Activated T-helper 2 cell treated with anti-CD3 and anti-CD28 coated beads, Interferon-gamma antibody, Interleukin-2, Interleukin-4, amounts not matched to agents 10 μg/mL and 5 μg/mL and 100 μg/mL, durations not matched to agents 14 hours and 24 hours and 36 hours (primary cell): ENCODE measurements at regions of chr2 and their contacts with region 1.

Region 1: GRCh38 chr2:237691908-237692600 is 64.7 kb downstream of the LRRFIP1 start:
- DNase-seq: peak; percentile 91
- H3K4me3 Mint-ChIP-seq: peak overlapping the region; percentile 99
- H3K27ac Mint-ChIP-seq: peak overlapping the region; percentile 98
- H3K4me1 Mint-ChIP-seq: peaks cover 59% of the 10 kb centered on the region
- H3K27me3 Mint-ChIP-seq: no peaks in the 10 kb centered on the region

Region 2: DNA sequence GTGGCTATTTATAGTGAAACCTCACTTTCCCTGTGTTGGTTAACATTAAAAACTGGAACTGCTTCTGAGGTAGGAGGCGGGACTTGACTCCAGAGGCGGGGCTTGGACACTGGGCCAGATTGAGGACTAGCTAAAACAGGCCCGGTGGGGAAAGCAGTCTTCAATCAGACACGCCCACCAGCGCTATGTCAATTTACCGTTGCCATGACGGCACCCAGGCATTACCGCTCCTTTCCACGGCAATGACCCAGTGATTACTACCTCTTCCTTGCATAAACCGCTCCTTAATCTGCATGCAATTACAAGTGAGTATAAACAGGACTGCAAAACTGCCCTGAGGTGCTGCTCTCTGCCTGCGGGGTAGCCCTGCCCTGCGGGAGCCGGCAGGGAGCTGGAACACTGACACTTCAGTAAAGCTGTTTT is 29.4 kb before region 1 on chr2:
- intact Hi-C with region 1: no loop called
- DNase-seq: peak; percentile 44
- H3K4me3 Mint-ChIP-seq: no peak overlapping the region
- H3K27ac Mint-ChIP-seq: no peak overlapping the region
- H3K4me1 Mint-ChIP-seq: peaks cover 6% of the 10 kb centered on the region
- H3K27me3 Mint-ChIP-seq: peaks cover 28% of the 10 kb centered on the region

Region 3: GRCh38 chr2:237731663-237732062 is 39.6 kb after region 1 on chr2:
- intact Hi-C with region 1: loop called (anchors 2 kb)
- DNase-seq: no peak
- H3K4me3 Mint-ChIP-seq: peak overlapping the region; percentile 49
- H3K27ac Mint-ChIP-seq: peak overlapping the region; percentile 91
- H3K4me1 Mint-ChIP-seq: peaks cover 45% of the 10 kb centered on the region
- H3K27me3 Mint-ChIP-seq: no peaks in the 10 kb centered on the region